ENCODE measurements at regions of chr6 and their contacts with region 1.

Region 1: DNA sequence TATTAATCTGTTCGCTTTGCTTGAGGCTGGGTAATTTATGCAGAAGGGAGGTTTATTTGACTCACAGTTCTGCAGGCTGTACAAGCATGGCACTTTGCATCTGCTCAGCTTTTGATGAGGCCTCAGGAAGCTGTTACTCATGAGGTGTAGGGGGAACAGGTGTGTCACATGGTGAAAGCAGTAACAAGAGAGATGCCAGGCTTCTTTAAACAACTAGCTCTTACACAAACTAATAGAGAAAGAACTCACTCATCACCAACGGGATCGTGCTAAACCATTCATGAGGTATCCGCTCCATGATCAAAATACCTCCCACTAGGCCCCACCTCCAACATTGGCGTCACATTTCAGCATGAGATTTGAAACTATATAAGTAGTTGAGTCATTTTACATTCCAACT is 34.4 kb upstream of the GCLC start:
- DNase-seq: peak; percentile 70
- H3K4me3 Mint-ChIP-seq: no peak overlapping the region
- H3K27ac Mint-ChIP-seq: no peak overlapping the region
- H3K4me1 Mint-ChIP-seq: peaks cover 19% of the 10 kb centered on the region
- H3K27me3 Mint-ChIP-seq: no peaks in the 10 kb centered on the region

Region 2: GRCh38 chr6:53591873-53592272 is 12.5 kb after region 1 on chr6:
- CTCF ChIA-PET with region 1: interaction called, 5 read pairs
- intact Hi-C with region 1: loop called (anchors 1 kb)
- DNase-seq: no peak
- H3K4me3 Mint-ChIP-seq: no peak overlapping the region
- H3K27ac Mint-ChIP-seq: no peak overlapping the region
- H3K4me1 Mint-ChIP-seq: peaks cover 10% of the 10 kb centered on the region
- H3K27me3 Mint-ChIP-seq: no peaks in the 10 kb centered on the region

Region 3: GRCh38 chr6:53615633-53616449 is 36.5 kb after region 1 on chr6:
- CTCF ChIA-PET with region 1: no interaction called
- intact Hi-C with region 1: loop called (anchors 1 kb)
- DNase-seq: peak; percentile 12
- H3K4me3 Mint-ChIP-seq: no peak overlapping the region
- H3K27ac Mint-ChIP-seq: no peak overlapping the region
- H3K4me1 Mint-ChIP-seq: peaks cover 4% of the 10 kb centered on the region
- H3K27me3 Mint-ChIP-seq: peaks cover 9% of the 10 kb centered on the region

Measured in activated naive CD4-positive, alpha-beta T cell treated with anti-CD3 and anti-CD28 coated beads for 36 hours (primary cell).